ENCODE measurements at regions of chr11 and their contacts with region 1.

Region 1: GRCh38 chr11:3091791-3092602 is 34.8 kb upstream of the CARS1 start:
- DNase-seq: peak; percentile 76
- H3K4me3 Mint-ChIP-seq: no peak overlapping the region
- H3K27ac Mint-ChIP-seq: no peak overlapping the region
- H3K4me1 Mint-ChIP-seq: peaks cover 7% of the 10 kb centered on the region
- H3K27me3 Mint-ChIP-seq: no peaks in the 10 kb centered on the region

Region 2: DNA sequence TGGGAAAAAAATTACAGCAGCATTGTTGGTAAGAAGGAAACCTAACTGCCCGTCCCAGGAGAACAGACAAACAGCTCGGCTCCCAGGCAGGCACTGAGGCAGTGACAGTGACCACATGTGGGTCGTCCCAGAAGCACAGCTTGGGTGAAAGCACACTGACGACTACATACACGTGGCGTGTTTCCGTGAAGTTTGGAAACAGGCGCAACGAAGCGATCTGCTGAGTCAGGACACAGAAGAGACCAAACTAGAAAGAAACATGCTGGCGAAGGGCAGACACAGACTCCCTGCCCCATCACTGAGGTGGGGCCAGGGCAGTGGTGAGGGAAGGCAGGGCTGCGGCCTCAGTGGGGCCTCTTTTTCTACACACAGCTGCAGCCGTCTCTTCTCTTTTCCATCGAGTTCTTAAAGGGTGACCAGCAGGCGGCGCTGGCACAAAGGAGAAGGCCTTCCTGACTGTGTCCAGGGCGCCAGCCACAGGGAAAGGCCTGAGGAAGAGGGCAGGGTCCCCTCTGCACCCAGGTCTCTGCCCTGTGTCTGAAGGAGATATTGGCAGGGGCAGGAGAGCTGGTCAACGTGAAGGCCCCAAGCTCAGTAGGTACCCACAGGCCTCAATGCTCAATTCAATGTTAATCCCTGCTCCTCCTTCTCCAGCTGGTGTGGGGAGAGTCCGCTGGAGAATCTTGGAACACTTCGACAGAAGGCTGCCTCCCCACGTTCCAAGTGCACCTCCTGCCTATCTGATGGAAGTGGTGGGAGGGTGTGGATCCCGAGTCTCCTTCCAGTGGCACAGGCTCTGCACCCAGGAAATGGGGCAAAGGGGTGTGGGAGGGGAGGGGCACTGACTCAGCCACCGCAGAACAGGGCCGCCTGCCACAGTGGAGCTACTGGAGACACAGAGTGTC is 54.7 kb before region 1 on chr11:
- CTCF ChIA-PET with region 1: interaction called, 24 read pairs
- POLR2A ChIA-PET with region 1: interaction called, 3 read pairs
- DNase-seq: peak; percentile 55
- H3K4me3 Mint-ChIP-seq: no peak overlapping the region
- H3K27ac Mint-ChIP-seq: peak overlapping the region; percentile 43
- H3K4me1 Mint-ChIP-seq: peaks cover 37% of the 10 kb centered on the region
- H3K27me3 Mint-ChIP-seq: no peaks in the 10 kb centered on the region

Region 3: GRCh38 chr11:3049430-3050243 is 42.4 kb before region 1 on chr11:
- CTCF ChIA-PET with region 1: interaction called, 10 read pairs
- POLR2A ChIA-PET with region 1: no interaction called
- DNase-seq: peak; percentile 55
- H3K4me3 Mint-ChIP-seq: peak overlapping the region; percentile 46
- H3K27ac Mint-ChIP-seq: peak overlapping the region; percentile 89
- H3K4me1 Mint-ChIP-seq: peaks cover 46% of the 10 kb centered on the region
- H3K27me3 Mint-ChIP-seq: no peaks in the 10 kb centered on the region

Region 4: GRCh38 chr11:3058753-3059664 is 33.0 kb before region 1 on chr11:
- CTCF ChIA-PET with region 1: interaction called, 14 read pairs
- POLR2A ChIA-PET with region 1: no interaction called
- DNase-seq: no peak
- H3K4me3 Mint-ChIP-seq: peak overlapping the region; percentile 47
- H3K27ac Mint-ChIP-seq: no peak overlapping the region
- H3K4me1 Mint-ChIP-seq: peaks cover 33% of the 10 kb centered on the region
- H3K27me3 Mint-ChIP-seq: peaks cover under 1% of the 10 kb centered on the region

Region 5: DNA sequence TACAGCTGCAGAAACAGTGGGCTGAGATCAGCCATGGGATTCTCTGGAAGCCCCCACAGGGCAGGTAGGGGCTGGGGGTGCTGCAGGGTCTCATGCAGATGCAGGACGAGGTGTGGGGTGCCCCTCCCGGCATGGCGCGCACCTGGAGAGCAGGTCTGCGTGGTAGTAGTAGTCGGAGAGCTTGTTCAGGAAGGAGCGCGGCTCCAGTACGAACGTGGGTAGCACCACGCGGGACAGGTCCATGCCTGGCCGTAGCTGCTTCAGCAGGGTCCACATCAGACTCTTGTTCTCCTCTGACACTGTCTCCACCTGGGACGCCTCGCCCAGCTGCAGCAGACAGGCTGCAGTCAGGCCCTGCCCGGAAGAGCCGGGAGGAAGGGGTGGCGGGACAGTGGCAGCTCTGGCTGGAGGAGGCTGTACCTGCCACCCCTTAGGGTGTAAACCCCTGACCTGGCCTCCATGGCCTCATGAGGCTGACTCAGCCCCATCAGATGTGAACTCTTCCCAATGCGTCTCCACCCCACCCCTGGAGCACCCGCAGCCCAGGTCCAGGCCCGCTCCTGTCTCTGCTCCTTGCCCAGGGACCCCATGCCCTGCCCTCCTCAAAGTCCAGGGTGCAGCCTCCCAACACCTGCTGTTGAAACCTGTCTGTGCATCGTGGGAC is 12.2 kb after region 1 on chr11:
- CTCF ChIA-PET with region 1: interaction called, 11 read pairs
- POLR2A ChIA-PET with region 1: no interaction called
- DNase-seq: no peak
- H3K4me3 Mint-ChIP-seq: no peak overlapping the region
- H3K27ac Mint-ChIP-seq: no peak overlapping the region
- H3K4me1 Mint-ChIP-seq: peaks cover 17% of the 10 kb centered on the region
- H3K27me3 Mint-ChIP-seq: no peaks in the 10 kb centered on the region